GM10248 (cell line): ENCODE measurements at regions of chr7 and their contacts with region 1.

Region 1: GRCh38 chr7:5083311-5083711 is 37.7 kb downstream of the RBAK start:
- DNase-seq: no peak
- CTCF ChIP-seq: no peak

Region 2: DNA sequence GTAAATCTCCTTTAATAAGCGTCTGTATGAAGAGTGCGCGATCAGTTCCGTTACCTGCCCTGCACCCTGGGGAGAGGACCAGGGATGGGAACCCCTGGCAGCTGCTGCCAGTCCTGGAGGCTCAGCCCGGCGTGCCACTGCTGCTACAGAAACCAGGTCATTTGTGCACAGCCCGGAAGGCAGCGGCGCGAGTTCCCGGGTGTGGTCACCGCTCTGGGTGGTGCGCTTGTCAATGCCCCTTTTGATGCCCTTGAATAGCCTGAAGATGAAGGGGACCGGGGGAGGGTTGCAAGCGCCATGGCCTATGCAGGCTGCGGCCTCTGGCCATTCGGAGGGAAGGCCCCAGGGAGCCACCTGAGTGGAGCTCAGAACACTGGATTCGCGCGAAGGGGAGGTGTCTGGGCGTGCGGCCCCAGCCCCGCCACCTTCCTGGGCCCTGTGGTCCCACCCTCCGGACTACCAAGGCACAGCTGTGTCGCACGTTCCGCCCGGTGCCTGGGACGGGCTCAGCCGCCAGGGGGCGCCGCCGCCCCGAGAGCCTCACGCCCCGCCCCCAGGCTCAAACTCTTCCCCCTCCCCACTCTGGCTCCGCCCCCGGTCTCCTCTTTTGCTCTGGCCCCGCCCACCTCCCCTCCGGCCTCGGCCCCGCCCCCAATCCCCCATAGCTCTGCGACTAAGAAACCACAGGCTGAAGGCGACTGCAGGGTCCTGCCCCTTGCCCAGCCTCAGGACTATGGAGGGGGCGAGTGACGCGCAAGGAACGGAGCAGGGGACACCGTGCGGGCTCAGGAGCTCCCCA is 291.4 kb before region 1 on chr7:
- CTCF ChIA-PET with region 1: interaction called, 19 read pairs
- POLR2A ChIA-PET with region 1: no interaction called
- DNase-seq: peak; percentile 89
- CTCF ChIP-seq: peak; percentile 74

Region 3: GRCh38 chr7:4809091-4809591 is 274.2 kb before region 1 on chr7:
- CTCF ChIA-PET with region 1: no interaction called
- POLR2A ChIA-PET with region 1: no interaction called
- DNase-seq: no peak
- CTCF ChIP-seq: no peak

Region 4: DNA sequence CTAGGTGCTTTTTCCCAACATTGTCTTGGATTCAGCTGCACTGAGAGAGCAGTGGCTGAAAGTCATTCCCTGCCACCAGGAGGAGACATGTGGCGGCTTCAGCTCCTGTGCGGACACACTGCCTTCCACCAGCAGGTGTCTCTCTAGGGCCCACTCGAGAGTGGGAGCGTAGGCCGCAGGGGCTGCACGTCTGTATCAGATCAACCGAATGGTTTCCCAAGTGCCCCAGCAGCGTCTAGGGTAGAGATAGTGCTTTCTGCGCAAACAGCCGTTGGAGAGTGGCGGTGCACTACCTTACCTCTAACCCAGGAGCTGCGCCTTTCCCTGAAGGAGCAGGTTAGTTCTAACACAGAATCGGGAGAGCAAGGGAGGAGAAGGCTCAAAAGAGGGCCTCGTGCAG is 253.1 kb before region 1 on chr7:
- CTCF ChIA-PET with region 1: interaction called, 23 read pairs
- POLR2A ChIA-PET with region 1: no interaction called
- DNase-seq: peak; percentile 57
- CTCF ChIP-seq: peak; percentile 84

Region 5: GRCh38 chr7:4849369-4849768 is 233.9 kb before region 1 on chr7:
- CTCF ChIA-PET with region 1: interaction called, 15 read pairs
- POLR2A ChIA-PET with region 1: no interaction called
- DNase-seq: no peak
- CTCF ChIP-seq: peak; percentile 29

Region 6: DNA sequence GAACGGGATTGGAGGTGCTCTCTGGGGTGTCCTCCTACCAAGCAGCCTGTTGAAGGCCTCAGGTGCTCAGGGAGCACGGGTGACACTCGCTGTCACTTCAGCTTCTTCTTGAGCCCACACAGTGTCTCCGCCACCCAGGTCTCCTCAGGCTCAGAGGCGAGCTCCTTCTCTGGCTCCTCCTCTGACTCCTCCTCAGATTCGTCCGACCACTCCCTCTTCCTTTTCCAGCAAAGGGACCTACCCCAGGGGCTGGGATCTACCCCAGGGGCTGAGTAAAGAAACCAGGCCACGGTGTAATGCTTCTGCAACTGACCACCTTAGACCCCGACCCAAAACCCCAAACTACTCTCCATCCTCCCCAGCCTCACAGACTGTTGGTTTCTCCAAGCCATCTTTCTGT is 46.9 kb before region 1 on chr7:
- CTCF ChIA-PET with region 1: no interaction called
- POLR2A ChIA-PET with region 1: no interaction called
- DNase-seq: no peak
- CTCF ChIP-seq: no peak